ENCODE measurements at regions of chr15 and their contacts with region 1.

Region 1: DNA sequence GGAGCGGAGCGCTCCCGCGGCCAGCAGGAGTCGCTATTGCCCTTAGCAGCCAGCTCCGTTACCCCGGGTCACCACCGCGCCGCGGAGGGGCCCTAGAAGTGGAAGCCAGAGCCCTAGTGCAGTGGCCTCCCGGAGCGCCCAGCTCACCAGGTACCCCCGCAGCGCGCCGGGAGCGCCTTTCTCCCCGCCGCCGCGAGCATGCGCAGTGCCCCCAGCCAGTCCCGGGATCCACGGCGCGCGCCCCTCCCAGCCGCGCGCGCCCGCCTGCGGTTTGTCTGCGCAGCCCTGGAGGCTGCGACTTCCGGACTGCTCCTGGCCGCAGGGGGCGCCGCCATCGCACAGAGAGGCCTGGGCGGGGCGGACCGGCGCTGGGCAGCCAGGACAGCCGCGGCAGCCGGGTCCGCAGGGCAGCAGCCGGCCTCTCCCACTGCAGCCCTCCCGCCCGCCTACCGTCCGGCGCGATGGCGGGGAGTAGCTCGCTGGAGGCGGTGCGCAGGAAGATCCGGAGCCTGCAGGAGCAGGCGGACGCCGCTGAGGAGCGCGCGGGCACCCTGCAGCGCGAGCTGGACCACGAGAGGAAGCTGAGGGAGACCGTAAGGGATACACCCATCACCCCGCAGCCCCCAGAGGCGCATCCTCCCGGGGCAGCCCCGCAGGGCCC is 5.7 kb downstream of the TPM1 start:
- DNase-seq: peak; percentile 91
- ATAC-seq: peak; percentile 80 to 81

Region 2: GRCh38 chr15:62928242-62928995 is 119.8 kb before region 1 on chr15:
- intact Hi-C with region 1: loop called in 1 of 2 experiments (anchors 10 kb)
- DNase-seq: peak; percentile 61
- ATAC-seq: peak; percentile 84 to 90

Region 3: DNA sequence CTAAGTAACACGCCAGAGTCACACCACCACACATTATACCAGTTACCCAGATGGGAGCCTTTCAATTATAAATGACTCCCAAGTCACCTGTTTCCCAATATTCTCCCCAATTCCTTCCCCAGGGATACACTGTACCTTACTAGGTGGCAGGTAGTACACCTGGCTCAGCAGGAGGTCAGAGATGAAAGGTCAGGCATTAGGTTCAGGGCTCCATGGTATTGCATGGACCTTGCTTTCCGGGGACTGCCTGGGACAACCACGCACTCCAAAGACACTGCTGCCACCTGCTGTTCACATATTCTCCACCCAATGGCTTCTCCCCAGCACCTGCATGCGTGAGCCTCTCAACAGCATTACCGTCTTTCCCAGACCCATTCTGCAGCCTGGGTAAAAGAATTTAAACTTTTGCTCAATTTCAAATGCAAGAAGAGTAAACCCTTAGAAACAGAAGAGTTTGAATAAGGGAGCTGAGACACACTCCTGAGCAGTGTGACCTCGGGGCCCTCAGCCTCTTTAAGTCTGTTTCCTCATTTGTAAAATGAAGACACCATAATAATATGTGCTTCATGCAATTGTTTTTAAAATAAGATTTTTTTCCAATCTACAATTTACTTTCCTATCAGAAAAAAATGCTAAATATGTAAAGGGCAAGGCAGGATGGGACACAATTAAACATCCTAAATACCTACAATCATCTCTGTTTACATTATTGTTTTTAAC is 45.4 kb after region 1 on chr15:
- intact Hi-C with region 1: loop called (anchors 2 to 5 kb)
- DNase-seq: peak; percentile 78
- ATAC-seq: peak; percentile 93

Measured in left cardiac atrium (tissue), 4 donors.